Activated CD4-positive, alpha-beta T cell treated with anti-CD3 and anti-CD28 coated beads, Interleukin-2, amount 10 ng/mL, durations not matched to agents 24 days and 14 days (primary cell): ENCODE measurements at regions of chr18 and their contacts with region 1.

Region 1: DNA sequence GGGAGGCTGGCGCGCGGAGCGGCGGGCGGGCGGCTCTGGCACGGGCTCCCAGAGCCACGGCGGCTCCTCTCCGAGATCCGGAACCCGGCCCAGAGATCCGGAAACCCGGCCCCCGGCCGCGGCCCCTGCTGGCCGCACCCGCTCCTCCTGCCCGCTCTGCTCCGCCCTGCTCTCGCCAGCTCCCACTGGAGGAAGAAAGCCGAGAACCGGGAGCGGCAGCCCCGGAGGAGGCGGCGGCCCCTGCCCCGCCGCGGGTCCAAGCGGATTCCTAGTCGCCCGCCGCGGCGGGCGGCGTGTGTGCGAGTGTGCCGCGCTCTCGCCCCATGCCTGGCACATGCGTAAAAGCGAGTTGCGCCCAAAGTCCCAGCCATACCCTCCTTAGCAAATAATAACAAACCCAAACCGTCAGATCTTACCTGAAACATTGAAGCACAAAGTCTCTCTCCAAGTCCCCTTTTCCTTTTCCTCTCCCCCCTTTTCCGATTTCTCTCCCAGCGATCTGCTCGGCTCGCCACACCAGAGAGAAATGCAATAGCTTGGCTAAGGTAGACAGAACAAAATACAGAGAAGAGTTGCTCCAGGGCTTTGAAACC is 108.7 kb upstream of the KCTD1 start:
- DNase-seq: peak; percentile 71
- H3K4me3 Mint-ChIP-seq: peak overlapping the region; percentile 88
- H3K27ac Mint-ChIP-seq: no peak overlapping the region
- H3K4me1 Mint-ChIP-seq: peaks cover 13% of the 10 kb centered on the region
- H3K27me3 Mint-ChIP-seq: peaks cover 73% of the 10 kb centered on the region

Region 2: GRCh38 chr18:25351777-25352628 is 1305.0 kb before region 1 on chr18 and contains the start of gene ZNF521:
- intact Hi-C with region 1: loop called (anchors 5 kb)
- DNase-seq: peak; percentile 79
- H3K4me3 Mint-ChIP-seq: peak within 1 kb of the TSS; percentile 77
- H3K27ac Mint-ChIP-seq: no peak within 1 kb of the TSS
- H3K4me1 Mint-ChIP-seq: peaks cover 9% of the 10 kb centered on the region
- H3K27me3 Mint-ChIP-seq: peaks cover 65% of the 10 kb centered on the region
- total RNA-seq, gene ZNF521: not detected in 2 replicates

Region 3: GRCh38 chr18:26307189-26307773 is 349.8 kb before region 1 on chr18:
- intact Hi-C with region 1: loop called (anchors 5 kb)
- DNase-seq: peak; percentile 73
- H3K4me3 Mint-ChIP-seq: no peak overlapping the region
- H3K27ac Mint-ChIP-seq: no peak overlapping the region
- H3K4me1 Mint-ChIP-seq: no peaks in the 10 kb centered on the region
- H3K27me3 Mint-ChIP-seq: no peaks in the 10 kb centered on the region